ENCODE measurements at regions of chr15 and their contacts with region 1.

Region 1: GRCh38 chr15:34708422-34708821 is 46.4 kb downstream of the GJD2 start:
- DNase-seq: peak; percentile 61
- H3K4me3 Mint-ChIP-seq: no peak overlapping the region
- H3K27ac Mint-ChIP-seq: no peak overlapping the region
- H3K4me1 Mint-ChIP-seq: no peaks in the 10 kb centered on the region
- H3K27me3 Mint-ChIP-seq: peaks cover 11% of the 10 kb centered on the region
- CTCF ChIP-seq: peak; percentile 76

Region 2: GRCh38 chr15:34621675-34622074 is 86.7 kb before region 1 on chr15:
- CTCF ChIA-PET with region 1: interaction called, 14 read pairs
- POLR2A ChIA-PET with region 1: no interaction called
- intact Hi-C with region 1: loop called (anchors 5 kb)
- DNase-seq: peak; percentile 51
- H3K4me3 Mint-ChIP-seq: no peak overlapping the region
- H3K27ac Mint-ChIP-seq: no peak overlapping the region
- H3K4me1 Mint-ChIP-seq: peaks cover 3% of the 10 kb centered on the region
- H3K27me3 Mint-ChIP-seq: peaks cover 15% of the 10 kb centered on the region
- CTCF ChIP-seq: peak; percentile 52

Region 3: GRCh38 chr15:34721802-34722795 is 13.7 kb after region 1 on chr15:
- CTCF ChIA-PET with region 1: interaction called, 27 read pairs
- POLR2A ChIA-PET with region 1: interaction called, 3 read pairs
- intact Hi-C with region 1: no loop called
- DNase-seq: peak; percentile 66
- H3K4me3 Mint-ChIP-seq: peak overlapping the region; percentile 53
- H3K27ac Mint-ChIP-seq: peak overlapping the region; percentile 47
- H3K4me1 Mint-ChIP-seq: peaks cover 9% of the 10 kb centered on the region
- H3K27me3 Mint-ChIP-seq: no peaks in the 10 kb centered on the region
- CTCF ChIP-seq: no peak

Region 4: GRCh38 chr15:34855397-34855796 is 147.0 kb after region 1 on chr15:
- CTCF ChIA-PET with region 1: interaction called, 16 read pairs
- POLR2A ChIA-PET with region 1: no interaction called
- intact Hi-C with region 1: loop called (anchors 10 kb)
- DNase-seq: peak; percentile 62
- H3K4me3 Mint-ChIP-seq: no peak overlapping the region
- H3K27ac Mint-ChIP-seq: no peak overlapping the region
- H3K4me1 Mint-ChIP-seq: peaks cover 14% of the 10 kb centered on the region
- H3K27me3 Mint-ChIP-seq: no peaks in the 10 kb centered on the region
- CTCF ChIP-seq: no peak

Region 5: DNA sequence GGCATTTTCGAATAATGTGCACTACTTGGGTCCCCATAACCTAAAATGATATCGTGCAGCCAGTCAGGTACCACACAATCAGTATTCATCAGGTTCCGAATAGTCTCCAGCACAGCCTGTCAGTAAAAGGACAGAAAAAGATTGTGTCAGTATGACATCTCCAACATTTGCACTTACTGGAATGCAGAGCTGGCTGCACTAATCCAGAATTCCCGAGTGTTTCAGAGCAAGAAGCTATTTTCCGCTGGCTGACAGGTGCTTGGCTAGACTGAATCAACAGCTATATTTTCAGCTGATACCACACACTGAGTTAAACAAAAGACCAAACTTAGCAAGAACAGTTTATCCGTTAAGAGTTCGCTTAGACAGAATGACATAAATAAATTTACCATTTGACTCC is 192.3 kb after region 1 on chr15:
- CTCF ChIA-PET with region 1: interaction called, 10 read pairs
- POLR2A ChIA-PET with region 1: interaction called, 3 read pairs
- intact Hi-C with region 1: no loop called
- DNase-seq: no peak
- H3K4me3 Mint-ChIP-seq: no peak overlapping the region
- H3K27ac Mint-ChIP-seq: no peak overlapping the region
- H3K4me1 Mint-ChIP-seq: no peaks in the 10 kb centered on the region
- H3K27me3 Mint-ChIP-seq: no peaks in the 10 kb centered on the region
- CTCF ChIP-seq: no peak

Region 6: GRCh38 chr15:34914317-34914716 is 205.9 kb after region 1 on chr15:
- CTCF ChIA-PET with region 1: interaction called, 28 read pairs
- POLR2A ChIA-PET with region 1: no interaction called
- intact Hi-C with region 1: no loop called
- DNase-seq: no peak
- H3K4me3 Mint-ChIP-seq: no peak overlapping the region
- H3K27ac Mint-ChIP-seq: no peak overlapping the region
- H3K4me1 Mint-ChIP-seq: no peaks in the 10 kb centered on the region
- H3K27me3 Mint-ChIP-seq: no peaks in the 10 kb centered on the region
- CTCF ChIP-seq: no peak

Measured in MCF 10A (cell line).